Posterior vena cava (tissue), 2 donors: ENCODE measurements at regions of chr18 and their contacts with region 1.

Region 1: DNA sequence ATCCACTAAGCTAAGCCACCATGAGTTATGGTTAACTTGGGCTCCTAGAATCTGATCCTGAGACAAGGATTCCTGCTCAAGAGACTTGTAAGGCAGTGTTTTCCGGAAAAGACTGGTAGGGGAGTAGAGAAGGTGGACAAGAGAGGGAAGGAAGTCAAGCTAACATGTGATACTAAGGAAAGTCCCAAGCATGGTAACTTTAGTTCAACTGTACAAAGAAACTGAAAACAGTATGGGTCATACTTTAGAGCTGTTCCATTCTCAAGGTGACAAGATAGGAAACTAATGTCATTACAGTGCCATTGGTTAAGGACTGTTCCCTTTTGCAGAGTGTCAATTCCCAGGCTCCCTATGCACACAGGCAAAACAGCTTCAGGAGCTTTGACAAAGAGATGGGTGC is 5.8 kb downstream of the MYO5B start:
- DNase-seq: no peak

Region 2: GRCh38 chr18:50172367-50172766 is 16.8 kb before region 1 on chr18:
- intact Hi-C with region 1: loop called in 1 of 2 experiments (anchors 1 kb)
- DNase-seq: no peak